ENCODE measurements at regions of chr7 and their contacts with region 1.

Region 1: GRCh38 chr7:120554960-120555571 is 282.1 kb downstream of the KCND2 start:
- DNase-seq: peak; percentile 23
- CTCF ChIP-seq: peak; percentile 64

Region 2: GRCh38 chr7:119270045-119270464 is 1285.0 kb before region 1 on chr7:
- in situ Hi-C with region 1: loop called (anchors 25 kb)
- DNase-seq: peak; percentile 6
- CTCF ChIP-seq: peak; percentile 91

Region 3: GRCh38 chr7:120441850-120442249 is 113.2 kb before region 1 on chr7:
- in situ Hi-C with region 1: no loop called
- DNase-seq: peak; percentile 11
- CTCF ChIP-seq: no peak

Measured in GM13977 (cell line).